ENCODE measurements at regions of chr17 and their contacts with region 1.

Region 1: DNA sequence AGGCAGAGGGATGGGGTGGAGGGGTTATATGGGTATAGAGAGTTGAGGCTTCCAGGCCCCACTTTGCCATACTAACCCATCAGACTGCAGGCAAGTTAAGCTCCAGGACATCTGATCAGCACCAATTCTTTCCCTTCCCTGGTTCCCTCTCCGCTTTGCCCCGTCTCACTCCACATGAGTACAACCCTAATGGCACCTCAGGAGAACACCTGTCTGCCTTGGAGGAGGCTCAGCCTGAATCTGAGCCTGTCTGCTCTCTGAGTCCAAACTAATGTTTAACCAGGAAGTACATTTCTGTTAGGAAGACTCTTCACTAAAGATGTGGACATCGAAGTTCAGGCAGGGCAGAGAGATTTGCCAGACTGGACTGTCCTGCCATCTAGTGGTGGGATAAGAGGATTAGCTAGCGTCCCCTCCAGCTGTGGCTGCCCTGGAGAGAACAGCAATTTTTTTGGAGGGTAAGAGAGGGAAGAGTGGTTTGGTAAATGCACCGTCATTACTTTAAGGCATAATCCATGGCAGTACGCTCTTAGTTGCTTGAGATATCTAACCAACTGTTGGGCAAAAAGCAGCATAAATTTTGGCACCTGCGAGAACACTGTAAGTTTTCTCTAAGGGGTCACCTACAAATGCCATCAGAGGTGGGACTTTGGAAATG is 29.2 kb upstream of the LRRC75A start:
- DNase-seq: peak; percentile 79
- ATAC-seq: peak; percentile 99
- H3K4me3 Mint-ChIP-seq: no peak overlapping the region
- H3K27ac Mint-ChIP-seq: no peak overlapping the region
- H3K4me1 Mint-ChIP-seq: peaks cover 7% of the 10 kb centered on the region
- H3K27me3 Mint-ChIP-seq: peaks cover 33% of the 10 kb centered on the region

Region 2: DNA sequence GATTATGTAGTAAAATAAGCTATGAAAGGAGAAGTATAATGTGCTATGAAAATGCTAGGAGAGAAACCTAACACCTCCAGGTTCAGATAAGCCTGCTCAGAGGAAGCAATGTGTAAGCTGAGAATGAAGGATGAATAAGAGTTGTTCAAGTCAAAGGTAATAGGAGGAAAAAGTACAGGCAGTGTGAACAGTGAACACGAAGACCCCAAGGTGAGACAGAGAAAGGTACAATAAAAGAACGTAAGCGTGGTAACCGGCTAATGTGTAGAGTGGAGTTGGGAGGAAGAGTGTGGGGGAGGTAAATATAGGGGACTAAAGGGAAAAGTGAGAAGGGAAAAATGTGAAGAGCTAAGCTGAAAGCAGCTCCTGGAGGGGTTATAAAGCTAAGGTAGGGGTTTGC is 447.4 kb before region 1 on chr17:
- CTCF ChIA-PET with region 1: no interaction called
- DNase-seq: no peak
- ATAC-seq: no peak
- H3K4me3 Mint-ChIP-seq: no peak overlapping the region
- H3K27ac Mint-ChIP-seq: no peak overlapping the region
- H3K4me1 Mint-ChIP-seq: no peaks in the 10 kb centered on the region
- H3K27me3 Mint-ChIP-seq: no peaks in the 10 kb centered on the region

Region 3: DNA sequence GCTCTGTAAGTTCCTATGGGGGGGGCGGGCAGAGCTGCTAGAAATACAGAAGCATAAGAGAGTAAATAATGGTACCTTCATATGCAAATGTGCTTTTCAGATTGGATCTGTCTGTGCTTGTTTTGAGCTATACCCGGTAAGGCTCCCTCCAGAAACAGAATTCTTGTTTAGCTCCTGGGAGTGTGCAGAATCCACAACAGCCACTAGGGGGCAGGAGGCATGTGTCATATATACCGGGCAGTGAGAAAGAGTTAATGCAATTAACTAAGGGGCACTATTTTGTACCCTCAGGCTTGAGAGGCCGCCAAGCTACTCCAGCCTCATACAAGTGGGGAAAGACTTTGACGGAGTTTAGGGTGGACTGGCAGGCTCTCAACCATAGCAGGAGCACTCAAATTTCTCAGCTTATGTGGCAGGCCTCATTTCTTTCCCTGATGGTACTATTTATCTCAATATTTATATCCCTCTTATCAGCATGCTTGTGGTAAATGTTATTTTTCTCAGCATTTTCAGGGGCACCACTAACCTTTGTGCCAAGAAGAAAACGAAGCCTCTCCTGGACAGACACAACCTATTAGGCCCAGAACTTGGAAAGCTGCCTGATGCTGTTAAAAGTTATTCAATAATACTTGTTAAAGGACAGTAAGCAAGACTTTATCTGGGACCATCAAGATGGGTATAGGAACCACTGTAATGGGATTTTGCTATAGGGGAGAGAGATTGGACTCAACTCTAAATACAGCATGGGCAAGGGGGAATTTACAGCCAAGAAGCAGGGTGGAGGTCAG is 157.3 kb before region 1 on chr17:
- CTCF ChIA-PET with region 1: interaction called, 64 read pairs
- DNase-seq: peak; percentile 86
- ATAC-seq: peak; percentile 96
- H3K4me3 Mint-ChIP-seq: no peak overlapping the region
- H3K27ac Mint-ChIP-seq: no peak overlapping the region
- H3K4me1 Mint-ChIP-seq: peaks cover 7% of the 10 kb centered on the region
- H3K27me3 Mint-ChIP-seq: peaks cover 2% of the 10 kb centered on the region

Region 4: DNA sequence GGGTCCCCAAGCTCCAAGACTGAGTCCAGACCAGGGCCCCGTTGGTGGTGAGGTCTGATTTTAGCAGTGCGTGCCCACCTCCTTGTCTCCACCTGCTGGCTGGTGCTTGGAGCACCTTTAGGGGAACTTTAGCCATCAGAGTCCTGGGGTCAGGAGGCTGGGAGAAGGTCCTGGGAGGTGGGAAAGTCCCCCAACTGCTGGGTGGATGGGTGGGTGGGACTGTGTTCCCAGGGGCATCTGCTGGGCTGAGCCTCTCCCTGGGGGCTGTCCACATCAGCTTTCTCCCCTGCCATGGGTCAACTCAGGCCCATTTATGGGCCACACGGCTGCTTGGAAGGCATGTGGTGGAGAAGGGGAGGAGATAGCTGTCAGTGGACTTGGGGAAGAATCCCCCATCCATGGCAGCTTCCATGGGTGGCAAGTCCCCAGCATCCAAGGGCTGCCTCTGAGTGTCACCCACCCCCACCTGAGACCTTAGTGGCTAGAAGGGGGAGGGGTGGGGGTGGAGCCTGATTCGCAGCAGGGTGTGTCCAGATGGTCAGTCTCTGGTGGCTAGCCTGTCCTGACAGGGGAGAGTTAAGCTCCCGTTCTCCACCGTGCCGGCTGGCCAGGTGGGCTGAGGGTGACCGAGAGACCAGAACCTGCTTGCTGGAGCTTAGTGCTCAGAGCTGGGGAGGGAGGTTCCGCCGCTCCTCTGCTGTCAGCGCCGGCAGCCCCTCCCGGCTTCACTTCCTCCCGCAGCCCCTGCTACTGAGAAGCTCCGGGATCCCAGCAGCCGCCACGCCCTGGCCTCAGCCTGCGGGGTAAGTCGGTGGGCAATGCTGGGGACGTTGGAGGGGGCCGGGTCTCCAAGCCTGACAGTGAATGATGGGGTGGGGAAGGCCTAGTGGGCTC is 105.9 kb before region 1 on chr17 and contains the start of gene TRPV2:
- CTCF ChIA-PET with region 1: interaction called, 13 read pairs
- DNase-seq: peak; percentile 80
- ATAC-seq: peak; percentile 45
- H3K4me3 Mint-ChIP-seq: peak within 1 kb of the TSS; percentile 98
- H3K27ac Mint-ChIP-seq: peak within 1 kb of the TSS; percentile 99
- H3K4me1 Mint-ChIP-seq: peaks cover 51% of the 10 kb centered on the region
- H3K27me3 Mint-ChIP-seq: no peaks in the 10 kb centered on the region
- total RNA-seq, gene TRPV2: 124 to 129 TPM

Region 5: GRCh38 chr17:16438557-16439302 is 82.5 kb before region 1 on chr17:
- CTCF ChIA-PET with region 1: interaction called, 14 read pairs
- DNase-seq: peak; percentile 98
- ATAC-seq: peak; percentile 88
- H3K4me3 Mint-ChIP-seq: peak overlapping the region; percentile 98
- H3K27ac Mint-ChIP-seq: peak overlapping the region; percentile 98
- H3K4me1 Mint-ChIP-seq: peaks cover 45% of the 10 kb centered on the region
- H3K27me3 Mint-ChIP-seq: no peaks in the 10 kb centered on the region

Region 6: DNA sequence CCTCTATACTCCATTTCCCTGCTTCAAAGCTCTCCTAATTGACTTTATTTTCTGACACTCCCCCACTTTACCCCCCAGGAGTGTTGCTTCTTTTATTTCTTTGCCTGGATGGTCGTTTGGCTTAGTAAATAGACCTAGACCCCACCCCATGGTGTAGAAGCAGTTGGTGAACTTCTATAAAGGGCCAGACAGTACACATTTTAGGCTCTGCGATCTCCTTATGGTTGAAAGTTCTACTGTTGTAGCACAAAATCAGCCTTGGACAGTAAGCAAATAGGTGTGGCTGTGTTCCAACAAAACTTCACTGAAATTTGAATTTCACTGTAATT is 15.9 kb after region 1 on chr17:
- CTCF ChIA-PET with region 1: interaction called, 11 read pairs
- DNase-seq: no peak
- ATAC-seq: no peak
- H3K4me3 Mint-ChIP-seq: peak overlapping the region; percentile 98
- H3K27ac Mint-ChIP-seq: peak overlapping the region; percentile 97
- H3K4me1 Mint-ChIP-seq: peaks cover 20% of the 10 kb centered on the region
- H3K27me3 Mint-ChIP-seq: peaks cover 2% of the 10 kb centered on the region